Endothelial cell of umbilical vein (primary cell): ENCODE measurements at regions of chr12 and their contacts with region 1.

Region 1: GRCh38 chr12:63843721-63844390 is 644 bp upstream of the SRGAP1 start:
- DNase-seq: peak; percentile 97
- H3K4me3 ChIP-seq: peak overlapping the region; percentile 56 to 70 (median 63)
- H3K27ac ChIP-seq: peak overlapping the region; percentile 55
- H3K4me1 ChIP-seq: peaks cover 15% of the 10 kb centered on the region
- H3K27me3 ChIP-seq: no peaks in the 10 kb centered on the region
- CTCF ChIP-seq: peak; percentile 94 to 98
- POLR2A ChIP-seq: no peak

Region 2: GRCh38 chr12:63853978-63854377 is 10.1 kb after region 1 on chr12:
- CTCF ChIA-PET with region 1: interaction called, 19 read pairs
- POLR2A ChIA-PET with region 1: no interaction called
- dilution Hi-C with region 1: no loop called
- intact Hi-C with region 1: no loop called
- DNase-seq: no peak
- H3K4me3 ChIP-seq: no peak overlapping the region
- H3K27ac ChIP-seq: no peak overlapping the region
- H3K4me1 ChIP-seq: no peaks in the 10 kb centered on the region
- H3K27me3 ChIP-seq: no peaks in the 10 kb centered on the region
- CTCF ChIP-seq: no peak
- POLR2A ChIP-seq: no peak

Region 3: DNA sequence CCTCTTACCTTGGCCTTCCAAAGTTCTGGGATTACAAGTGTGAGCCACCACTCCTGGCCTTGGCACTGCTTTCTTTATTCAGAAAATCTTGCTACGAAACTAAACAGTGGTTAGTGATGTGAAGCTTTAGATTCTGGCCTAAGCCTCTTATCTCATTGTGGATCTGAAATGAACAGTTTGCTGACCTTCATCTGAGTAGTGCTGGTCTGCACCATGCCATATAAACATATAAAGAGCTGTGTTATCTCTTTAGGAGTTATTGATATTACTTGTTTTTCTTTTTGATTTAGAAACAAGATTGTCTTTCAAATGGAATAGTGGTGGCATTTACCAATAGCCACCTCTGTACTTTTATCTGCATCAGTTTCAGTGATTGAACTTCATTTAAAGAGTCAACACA is 23.2 kb after region 1 on chr12:
- CTCF ChIA-PET with region 1: no interaction called
- POLR2A ChIA-PET with region 1: no interaction called
- dilution Hi-C with region 1: no loop called
- intact Hi-C with region 1: no loop called
- DNase-seq: no peak
- H3K4me3 ChIP-seq: no peak overlapping the region
- H3K27ac ChIP-seq: no peak overlapping the region
- H3K4me1 ChIP-seq: peaks cover 5% of the 10 kb centered on the region
- H3K27me3 ChIP-seq: no peaks in the 10 kb centered on the region
- CTCF ChIP-seq: no peak
- POLR2A ChIP-seq: no peak

Region 4: DNA sequence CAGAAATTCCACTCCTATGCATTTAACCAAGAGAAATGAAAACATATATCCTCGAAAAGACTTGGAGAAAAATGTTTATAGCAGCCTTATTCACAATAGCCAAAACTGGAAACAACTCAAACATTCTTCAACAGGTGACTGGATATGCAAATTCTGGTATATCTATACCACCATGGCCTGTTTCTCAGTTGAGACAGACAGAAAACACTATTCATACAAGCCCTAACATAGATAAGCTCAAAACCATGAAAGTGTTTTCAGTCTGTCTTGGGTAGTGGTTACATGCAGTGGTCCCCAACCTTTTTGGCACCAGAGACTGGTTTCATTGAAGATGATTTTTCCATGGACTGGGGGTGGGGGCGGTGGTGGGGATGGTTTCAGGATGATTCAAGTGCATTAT is 84.4 kb after region 1 on chr12:
- CTCF ChIA-PET with region 1: no interaction called
- POLR2A ChIA-PET with region 1: no interaction called
- dilution Hi-C with region 1: no loop called
- intact Hi-C with region 1: no loop called
- DNase-seq: no peak
- H3K4me3 ChIP-seq: no peak overlapping the region
- H3K27ac ChIP-seq: no peak overlapping the region
- H3K4me1 ChIP-seq: peaks cover 2% of the 10 kb centered on the region
- H3K27me3 ChIP-seq: no peaks in the 10 kb centered on the region
- CTCF ChIP-seq: no peak
- POLR2A ChIP-seq: no peak

Region 5: GRCh38 chr12:63967358-63968145 is 123.7 kb after region 1 on chr12:
- CTCF ChIA-PET with region 1: interaction called, 12 read pairs
- POLR2A ChIA-PET with region 1: no interaction called
- dilution Hi-C with region 1: no loop called
- intact Hi-C with region 1: loop called (anchors 2 kb)
- DNase-seq: peak; percentile 51
- H3K4me3 ChIP-seq: no peak overlapping the region
- H3K27ac ChIP-seq: peak overlapping the region; percentile 50
- H3K4me1 ChIP-seq: peaks cover 29% of the 10 kb centered on the region
- H3K27me3 ChIP-seq: no peaks in the 10 kb centered on the region
- CTCF ChIP-seq: no peak
- POLR2A ChIP-seq: no peak

Region 6: GRCh38 chr12:64088431-64089349 is 244.8 kb after region 1 on chr12:
- CTCF ChIA-PET with region 1: interaction called, 22 read pairs
- POLR2A ChIA-PET with region 1: interaction called, 3 read pairs
- dilution Hi-C with region 1: no loop called
- intact Hi-C with region 1: loop called (anchors 1 kb)
- DNase-seq: peak; percentile 92
- H3K4me3 ChIP-seq: peak overlapping the region in 2 of 3 experiments; percentile 7 to 52
- H3K27ac ChIP-seq: peak overlapping the region; percentile 71
- H3K4me1 ChIP-seq: peaks cover 18% of the 10 kb centered on the region
- H3K27me3 ChIP-seq: no peaks in the 10 kb centered on the region
- CTCF ChIP-seq: no peak
- POLR2A ChIP-seq: peak; percentile 73

Region 7: GRCh38 chr12:64222009-64222765 is 378.3 kb after region 1 on chr12 and contains the start of gene KICS2:
- CTCF ChIA-PET with region 1: interaction called, 10 read pairs
- POLR2A ChIA-PET with region 1: no interaction called
- dilution Hi-C with region 1: no loop called
- intact Hi-C with region 1: loop called (anchors 1 kb)
- DNase-seq: peak; percentile 95
- H3K4me3 ChIP-seq: peak within 1 kb of the TSS; percentile 50 to 80 (median 67)
- H3K27ac ChIP-seq: peak within 1 kb of the TSS; percentile 80
- H3K4me1 ChIP-seq: peaks cover 7% of the 10 kb centered on the region
- H3K27me3 ChIP-seq: no peaks in the 10 kb centered on the region
- CTCF ChIP-seq: no peak
- POLR2A ChIP-seq: peak; percentile 67
- total RNA-seq, gene KICS2: 3.2 and 3.8 TPM in 2 replicates

Region 8: GRCh38 chr12:64392221-64392620 is 548.4 kb after region 1 on chr12:
- CTCF ChIA-PET with region 1: interaction called, 6 read pairs
- POLR2A ChIA-PET with region 1: no interaction called
- dilution Hi-C with region 1: no loop called
- intact Hi-C with region 1: loop called (anchors 5 kb)
- DNase-seq: peak; percentile 59
- H3K4me3 ChIP-seq: no peak overlapping the region
- H3K27ac ChIP-seq: no peak overlapping the region
- H3K4me1 ChIP-seq: peaks cover 19% of the 10 kb centered on the region
- H3K27me3 ChIP-seq: peaks cover 3 to 5% of the 10 kb centered on the region in 2 experiments
- CTCF ChIP-seq: peak; percentile 25 to 27
- POLR2A ChIP-seq: no peak